ENCODE measurements at regions of chr10 and their contacts with region 1.

Region 1: DNA sequence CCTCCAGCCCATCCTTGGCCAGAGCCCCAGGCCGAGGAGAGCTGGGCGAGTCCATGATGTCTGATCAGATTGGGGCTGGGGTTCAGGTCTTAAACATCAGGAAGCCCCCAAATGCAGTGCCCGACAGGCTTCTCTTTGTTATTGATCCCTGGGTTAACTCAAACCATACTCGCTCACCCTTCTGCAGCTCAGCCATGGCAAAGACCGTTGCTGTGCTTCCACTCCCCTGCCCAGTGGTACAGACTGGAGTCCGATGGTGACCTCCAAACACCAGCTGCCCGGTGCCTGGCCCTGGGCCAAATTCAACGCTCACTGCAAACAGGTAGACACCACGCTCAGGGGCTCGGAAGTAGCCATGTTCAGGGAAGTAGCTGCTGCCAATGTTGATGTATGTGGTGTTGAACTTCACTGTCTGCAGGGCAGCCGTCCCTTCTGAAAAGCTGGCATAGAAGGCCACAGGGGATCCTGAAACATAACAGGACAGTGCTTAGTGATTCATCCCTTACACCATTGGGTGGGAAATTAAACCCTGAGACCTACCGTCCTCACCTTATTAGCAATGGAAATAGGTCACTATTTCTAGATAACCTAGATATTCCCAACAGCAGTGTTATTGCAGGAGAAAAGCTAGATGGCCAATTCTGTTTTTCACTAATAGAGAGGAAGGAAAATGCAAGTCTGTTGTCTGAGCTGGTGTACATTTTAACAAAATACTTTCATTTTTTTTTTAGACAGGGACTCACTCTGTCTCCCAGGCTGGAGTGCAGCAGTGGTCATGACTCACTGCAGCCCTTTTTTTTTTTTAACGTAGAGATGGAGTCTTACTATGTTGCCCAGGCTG is 20.5 kb downstream of the MMRN2 start:
- DNase-seq: no peak
- ATAC-seq: no peak
- H3K4me3 ChIP-seq: no peak overlapping the region
- H3K27ac ChIP-seq: no peak overlapping the region
- H3K4me1 ChIP-seq: peaks cover 1% of the 10 kb centered on the region; the same call in 1 of the 3 replicates
- CTCF ChIP-seq: no peak
- EP300 ChIP-seq: no peak
- POLR2A ChIP-seq: no peak
- RAD21 ChIP-seq: no peak

Region 2: GRCh38 chr10:86953747-86954680 is 17.1 kb after region 1 on chr10:
- CTCF ChIA-PET with region 1: interaction called, 42 read pairs
- POLR2A ChIA-PET with region 1: no interaction called
- DNase-seq: no peak
- ATAC-seq: peak; percentile 9 to 39; a peak in 4 of 6 replicates
- H3K4me3 ChIP-seq: no peak overlapping the region
- H3K27ac ChIP-seq: peak overlapping the region in 1 of 2 experiments; percentile 48; a peak in 3 of 6 replicates
- H3K4me1 ChIP-seq: peaks cover 30% of the 10 kb centered on the region
- CTCF ChIP-seq: no peak
- EP300 ChIP-seq: no peak
- POLR2A ChIP-seq: no peak
- RAD21 ChIP-seq: no peak

Region 3: GRCh38 chr10:86960003-86960862 is 23.4 kb after region 1 on chr10:
- CTCF ChIA-PET with region 1: interaction called, 42 read pairs
- POLR2A ChIA-PET with region 1: no interaction called
- DNase-seq: peak in 1 of 2 experiments; percentile 84
- ATAC-seq: peak; percentile 36 to 82
- H3K4me3 ChIP-seq: no peak overlapping the region
- H3K27ac ChIP-seq: peak overlapping the region; percentile 68 to 89
- H3K4me1 ChIP-seq: peaks cover 39% of the 10 kb centered on the region
- CTCF ChIP-seq: peak; percentile 82
- EP300 ChIP-seq: no peak
- POLR2A ChIP-seq: no peak
- RAD21 ChIP-seq: peak; percentile 64 to 82

Region 4: DNA sequence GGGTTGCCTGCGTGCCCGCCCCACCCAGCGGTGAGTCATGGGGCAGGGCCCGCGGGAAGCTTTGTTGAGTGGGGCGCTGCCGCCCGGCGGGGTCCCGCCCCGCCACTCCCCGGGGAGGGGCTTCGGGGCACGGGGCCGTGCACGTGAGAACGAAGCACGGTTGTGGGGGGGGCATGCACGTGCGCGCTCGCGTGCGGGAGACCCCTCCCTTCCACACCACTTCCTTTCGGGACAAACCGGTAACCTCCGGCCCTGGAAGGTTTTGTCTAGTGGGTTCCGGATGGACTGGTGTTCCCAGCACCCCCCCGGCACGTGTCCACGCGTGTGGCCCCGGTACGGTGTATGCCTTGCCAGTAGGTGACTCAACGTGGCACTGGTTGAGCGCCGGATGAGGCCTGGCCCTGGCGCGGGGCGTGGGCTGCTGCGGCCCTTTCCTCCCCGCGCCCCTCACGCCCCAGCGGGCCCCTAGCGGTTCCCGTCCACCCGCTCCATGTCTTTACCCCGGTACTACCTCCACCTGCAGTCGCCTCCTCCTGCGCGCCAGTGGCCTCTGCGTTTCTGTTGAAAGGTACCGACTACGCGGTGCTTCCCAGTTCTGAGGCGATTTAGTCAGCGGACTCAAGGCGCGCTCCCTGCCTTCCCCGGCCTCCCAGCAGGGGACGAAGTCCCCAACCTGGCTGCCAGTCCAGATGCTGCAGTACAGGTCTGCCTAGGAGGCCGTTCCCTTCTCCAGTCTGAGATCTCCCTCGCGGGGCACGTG is 34.5 kb after region 1 on chr10:
- CTCF ChIA-PET with region 1: interaction called, 57 read pairs
- POLR2A ChIA-PET with region 1: interaction called, 6 read pairs
- DNase-seq: peak; percentile 79 to 85
- ATAC-seq: peak; percentile 68 to 79
- H3K4me3 ChIP-seq: peak overlapping the region; percentile 59
- H3K27ac ChIP-seq: peak overlapping the region; percentile 87 to 96
- H3K4me1 ChIP-seq: peaks cover 40% of the 10 kb centered on the region
- CTCF ChIP-seq: no peak
- EP300 ChIP-seq: no peak
- POLR2A ChIP-seq: no peak
- RAD21 ChIP-seq: no peak; a peak in 1 of 5 replicates

Region 5: GRCh38 chr10:86981716-86982115 is 44.8 kb after region 1 on chr10:
- CTCF ChIA-PET with region 1: no interaction called
- POLR2A ChIA-PET with region 1: no interaction called
- DNase-seq: no peak
- ATAC-seq: no peak
- H3K4me3 ChIP-seq: no peak overlapping the region
- H3K27ac ChIP-seq: no peak overlapping the region
- H3K4me1 ChIP-seq: peaks cover 23% of the 10 kb centered on the region
- CTCF ChIP-seq: no peak
- EP300 ChIP-seq: no peak
- POLR2A ChIP-seq: no peak
- RAD21 ChIP-seq: no peak

Region 6: GRCh38 chr10:87094373-87095235 is 157.7 kb after region 1 on chr10 and contains the starts of genes GLUD1 and SHLD2:
- CTCF ChIA-PET with region 1: interaction called, 9 read pairs
- POLR2A ChIA-PET with region 1: interaction called, 19 read pairs
- DNase-seq: peak; percentile 86 to 94
- ATAC-seq: peak; percentile 77 to 83
- H3K4me3 ChIP-seq: peak within 1 kb of the TSS; percentile 92
- H3K27ac ChIP-seq: peak within 1 kb of the TSS; percentile 95 to 97
- H3K4me1 ChIP-seq: peaks cover 38% of the 10 kb centered on the region
- CTCF ChIP-seq: no peak
- EP300 ChIP-seq: no peak
- POLR2A ChIP-seq: peak; percentile 98
- RAD21 ChIP-seq: no peak
- polyA plus RNA-seq, gene GLUD1: 117 and 118 TPM in 2 replicates
- polyA plus RNA-seq, gene SHLD2: 39.9 and 45.4 TPM in 2 replicates